Kidney (tissue), 22 donors: ENCODE measurements at regions of chr15 and their contacts with region 1.

Region 1: DNA sequence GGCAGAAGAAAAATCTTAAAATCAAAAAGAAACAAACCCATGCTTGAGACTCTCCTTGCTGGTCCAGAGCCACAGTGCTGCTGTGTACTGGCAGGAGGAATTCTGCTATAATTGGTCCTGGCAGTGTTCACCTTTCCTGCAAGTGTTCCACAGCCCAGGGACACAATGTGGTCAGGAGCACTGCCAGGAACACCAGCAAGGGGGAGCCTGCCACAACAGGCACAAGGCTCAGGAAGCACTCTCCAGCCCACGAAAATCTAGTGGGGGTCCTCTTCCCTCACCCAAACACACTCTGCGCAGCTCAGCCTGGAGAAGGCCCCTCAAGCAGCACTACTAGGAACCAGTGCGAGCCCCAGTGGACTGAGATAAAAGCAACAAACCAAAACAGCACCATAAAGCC is 92.9 kb downstream of the UBE3A start:
- DNase-seq: no peak
- H3K4me3 ChIP-seq: no peak overlapping the region
- H3K27ac ChIP-seq: no peak overlapping the region
- H3K4me1 ChIP-seq: no peaks in the 10 kb centered on the region
- H3K27me3 ChIP-seq: no peaks in the 10 kb centered on the region
- CTCF ChIP-seq: no peak

Region 2: DNA sequence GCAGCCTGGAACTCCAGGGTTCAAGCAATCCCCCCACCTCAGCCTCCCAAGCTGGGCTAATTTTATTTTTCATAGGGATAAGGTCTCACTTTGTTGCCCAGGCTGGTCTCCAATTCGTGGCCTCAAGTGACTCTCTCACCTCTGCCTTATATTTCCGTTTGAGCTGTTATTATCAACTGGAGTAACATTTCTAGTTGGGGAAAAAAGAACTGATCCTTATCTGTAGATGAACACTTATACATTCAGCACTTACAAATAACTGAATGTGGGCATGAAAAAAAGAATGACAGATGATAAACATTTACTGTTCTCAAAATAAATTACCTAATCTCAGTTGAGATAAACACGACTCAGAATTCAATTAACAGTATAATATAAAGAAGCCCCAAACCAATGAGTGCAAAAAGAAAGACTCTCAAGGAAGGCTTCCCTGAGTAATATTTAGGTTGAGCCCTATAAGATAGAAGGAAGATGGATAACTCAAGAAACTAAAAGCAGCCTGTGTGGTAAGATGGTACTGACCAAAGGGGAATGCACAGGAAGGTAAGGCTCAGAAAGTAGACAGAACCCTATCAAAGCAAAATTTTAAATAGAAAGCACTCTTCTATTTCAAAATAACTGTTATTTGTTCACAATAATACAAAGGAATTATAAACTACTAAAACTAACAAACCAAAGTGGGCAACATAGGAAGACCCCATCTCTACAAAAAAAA is 81.1 kb after region 1 on chr15:
- intact Hi-C with region 1: loop called (anchors 10 kb)
- DNase-seq: no peak
- H3K4me3 ChIP-seq: no peak overlapping the region
- H3K27ac ChIP-seq: no peak overlapping the region
- H3K4me1 ChIP-seq: peaks cover 0 to 12% (median 0%) of the 10 kb centered on the region in 3 donors
- H3K27me3 ChIP-seq: no peaks in the 10 kb centered on the region
- CTCF ChIP-seq: no peak